Activated B cell treated with CpG ODN at 0.5 μM for 24 hours (primary cell): ENCODE measurements at regions of chr7 and their contacts with region 1.

Region 1: GRCh38 chr7:98251841-98252639 is at the start of gene TECPR1:
- DNase-seq: peak; percentile 85
- ATAC-seq: peak; percentile 96
- H3K4me3 Mint-ChIP-seq: peak within 1 kb of the TSS; percentile 94
- H3K27ac Mint-ChIP-seq: peak within 1 kb of the TSS; percentile 80
- H3K4me1 Mint-ChIP-seq: peaks cover 39% of the 10 kb centered on the region
- H3K27me3 Mint-ChIP-seq: no peaks in the 10 kb centered on the region
- CTCF ChIP-seq: no peak
- total RNA-seq, gene TECPR1: 24.6 and 34.5 TPM in 2 replicates

Region 2: DNA sequence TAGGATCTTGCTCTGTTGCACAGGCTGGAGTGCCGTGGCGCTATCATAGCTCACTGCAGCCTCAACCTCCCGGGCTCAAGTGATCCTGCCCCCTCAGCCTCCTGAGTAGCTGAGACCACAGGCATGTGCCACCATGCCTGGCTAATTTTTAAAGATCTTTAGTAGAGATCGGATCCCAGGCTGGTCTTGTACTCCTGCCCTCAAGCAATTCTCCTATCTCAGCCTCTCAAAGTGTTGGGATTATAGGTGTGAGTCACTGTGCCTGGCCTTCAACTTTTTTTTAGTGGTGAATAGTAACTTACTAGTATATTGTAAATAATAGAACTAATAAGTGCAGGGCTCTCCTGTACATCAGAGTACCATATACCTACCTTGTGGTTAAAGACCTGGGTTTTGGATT is 197.5 kb before region 1 on chr7:
- CTCF ChIA-PET with region 1: no interaction called
- POLR2A ChIA-PET with region 1: no interaction called
- intact Hi-C with region 1: no loop called
- DNase-seq: no peak
- ATAC-seq: no peak
- H3K4me3 Mint-ChIP-seq: no peak overlapping the region
- H3K27ac Mint-ChIP-seq: no peak overlapping the region
- H3K4me1 Mint-ChIP-seq: peaks cover 6% of the 10 kb centered on the region
- H3K27me3 Mint-ChIP-seq: peaks cover 14% of the 10 kb centered on the region
- CTCF ChIP-seq: no peak

Region 3: GRCh38 chr7:98138672-98139071 is 113.4 kb before region 1 on chr7:
- CTCF ChIA-PET with region 1: no interaction called
- POLR2A ChIA-PET with region 1: no interaction called
- intact Hi-C with region 1: loop called (anchors 1 kb)
- DNase-seq: no peak
- ATAC-seq: no peak
- H3K4me3 Mint-ChIP-seq: no peak overlapping the region
- H3K27ac Mint-ChIP-seq: no peak overlapping the region
- H3K4me1 Mint-ChIP-seq: peaks cover 45% of the 10 kb centered on the region
- H3K27me3 Mint-ChIP-seq: peaks cover 40% of the 10 kb centered on the region
- CTCF ChIP-seq: no peak

Region 4: DNA sequence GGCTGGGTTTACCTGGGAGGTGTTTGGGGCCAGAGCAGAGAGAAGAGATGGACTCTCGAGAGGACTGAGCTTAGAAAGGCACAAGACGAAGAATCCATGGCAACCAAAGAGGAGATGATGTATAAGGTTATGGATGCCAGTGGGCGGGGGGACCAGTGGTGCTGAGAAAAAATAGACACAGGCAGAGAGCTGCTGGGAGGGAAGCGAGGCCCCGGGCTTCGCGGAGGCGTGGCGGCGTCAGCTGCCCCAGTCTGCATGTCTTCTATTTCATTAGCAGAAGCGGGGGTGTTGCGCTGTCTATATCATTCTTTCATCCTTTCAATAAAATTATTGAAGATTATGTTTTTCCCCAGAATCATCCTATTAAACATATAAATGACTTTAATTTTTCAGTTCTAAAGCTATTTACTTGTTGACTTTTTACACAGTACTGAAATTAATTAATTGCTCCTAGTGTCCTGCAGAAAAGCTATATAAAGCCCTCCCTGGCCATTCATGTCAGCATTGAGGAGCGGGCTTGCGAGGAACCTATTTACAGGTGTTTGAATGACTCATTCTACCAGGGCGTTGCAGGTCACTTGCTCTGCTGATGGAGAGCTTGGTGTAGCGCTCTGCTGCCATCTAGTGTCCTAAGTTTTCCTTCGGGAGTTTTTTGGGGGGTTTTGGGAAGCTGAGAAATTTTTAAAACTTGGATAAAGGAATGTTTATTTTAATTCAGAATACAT is 83.7 kb before region 1 on chr7:
- CTCF ChIA-PET with region 1: no interaction called
- POLR2A ChIA-PET with region 1: no interaction called
- intact Hi-C with region 1: no loop called
- DNase-seq: peak; percentile 34
- ATAC-seq: peak; percentile 66
- H3K4me3 Mint-ChIP-seq: no peak overlapping the region
- H3K27ac Mint-ChIP-seq: no peak overlapping the region
- H3K4me1 Mint-ChIP-seq: peaks cover 10% of the 10 kb centered on the region
- H3K27me3 Mint-ChIP-seq: peaks cover 2% of the 10 kb centered on the region
- CTCF ChIP-seq: peak; percentile 56

Region 5: GRCh38 chr7:98217623-98218582 is 34.1 kb before region 1 on chr7:
- CTCF ChIA-PET with region 1: no interaction called
- POLR2A ChIA-PET with region 1: interaction called, 10 read pairs
- intact Hi-C with region 1: loop called (anchors 5 kb)
- DNase-seq: no peak
- ATAC-seq: peak; percentile 53
- H3K4me3 Mint-ChIP-seq: peak overlapping the region; percentile 21
- H3K27ac Mint-ChIP-seq: no peak overlapping the region
- H3K4me1 Mint-ChIP-seq: peaks cover 21% of the 10 kb centered on the region
- H3K27me3 Mint-ChIP-seq: no peaks in the 10 kb centered on the region
- CTCF ChIP-seq: no peak

Region 6: DNA sequence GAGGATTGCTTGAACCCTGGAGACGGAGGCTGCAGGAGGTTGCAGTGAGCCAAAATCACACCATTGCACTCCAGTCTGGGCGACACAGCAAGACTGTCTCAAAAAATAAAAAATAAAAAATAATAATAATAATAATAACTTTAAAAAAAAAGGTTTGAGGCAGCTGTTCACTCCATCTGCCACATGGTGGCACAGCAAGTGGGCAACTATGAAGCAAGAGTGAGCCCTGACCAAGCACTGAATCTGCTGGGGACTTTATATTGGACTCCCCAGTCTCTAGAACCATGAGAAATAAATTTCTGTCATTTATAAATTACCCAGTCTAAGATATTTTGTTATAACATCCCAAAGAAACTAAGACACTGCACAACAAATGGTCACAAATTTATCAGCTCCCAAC is 14.8 kb after region 1 on chr7:
- CTCF ChIA-PET with region 1: no interaction called
- POLR2A ChIA-PET with region 1: no interaction called
- intact Hi-C with region 1: loop called (anchors 2 kb)
- DNase-seq: no peak
- ATAC-seq: peak; percentile 28
- H3K4me3 Mint-ChIP-seq: no peak overlapping the region
- H3K27ac Mint-ChIP-seq: no peak overlapping the region
- H3K4me1 Mint-ChIP-seq: no peaks in the 10 kb centered on the region
- H3K27me3 Mint-ChIP-seq: no peaks in the 10 kb centered on the region
- CTCF ChIP-seq: no peak

Region 7: DNA sequence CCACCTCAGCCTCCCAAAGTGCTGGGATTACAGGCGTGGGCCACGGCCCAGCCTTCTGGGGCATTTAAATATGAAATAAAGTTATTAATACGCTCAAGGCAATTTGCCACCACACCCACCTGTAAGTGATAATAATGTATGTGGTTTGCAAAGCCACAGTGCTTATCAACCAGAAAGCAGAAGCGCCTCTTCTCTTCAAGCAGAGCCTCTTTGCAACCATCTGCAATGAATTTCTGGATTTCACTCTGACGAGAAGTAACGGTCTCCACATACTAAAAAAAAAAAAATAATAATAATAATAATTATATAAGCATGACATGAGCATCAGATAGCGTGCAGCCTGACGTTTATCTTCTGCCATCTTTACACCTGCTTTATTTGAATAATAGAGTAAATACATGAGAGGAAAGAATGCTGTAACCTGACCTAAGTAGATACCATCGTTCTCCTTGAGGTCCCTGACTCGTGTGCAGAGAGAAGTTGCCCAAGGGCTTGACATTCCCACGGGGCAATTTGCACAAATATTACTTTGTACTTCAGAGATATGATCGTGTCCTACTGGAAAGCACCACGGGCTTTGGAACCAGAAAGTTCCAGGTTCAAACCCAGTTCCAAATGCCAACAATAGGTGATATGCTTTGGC is 63.4 kb after region 1 on chr7:
- CTCF ChIA-PET with region 1: no interaction called
- POLR2A ChIA-PET with region 1: interaction called, 7 read pairs
- intact Hi-C with region 1: loop called (anchors 2 kb)
- DNase-seq: no peak
- ATAC-seq: peak; percentile 61
- H3K4me3 Mint-ChIP-seq: peak overlapping the region; percentile 15
- H3K27ac Mint-ChIP-seq: peak overlapping the region; percentile 76
- H3K4me1 Mint-ChIP-seq: peaks cover 41% of the 10 kb centered on the region
- H3K27me3 Mint-ChIP-seq: peaks cover 28% of the 10 kb centered on the region
- CTCF ChIP-seq: no peak